A549 (cell line): ENCODE measurements at regions of chr2 and their contacts with region 1.

Region 1: GRCh38 chr2:64873472-64873924 is 115.7 kb upstream of the SLC1A4 start:
- DNase-seq: peak; percentile 65 to 73
- ATAC-seq: peak; percentile 83 to 94
- H3K4me3 ChIP-seq: no peak overlapping the region
- H3K27ac ChIP-seq: no peak overlapping the region
- H3K4me1 ChIP-seq: peaks cover 15% of the 10 kb centered on the region
- CTCF ChIP-seq: peak; percentile 95
- EP300 ChIP-seq: no peak
- POLR2A ChIP-seq: no peak
- RAD21 ChIP-seq: peak; percentile 94 to 97

Region 2: GRCh38 chr2:64595397-64596160 is 277.9 kb before region 1 on chr2:
- CTCF ChIA-PET with region 1: interaction called, 19 read pairs
- POLR2A ChIA-PET with region 1: no interaction called
- DNase-seq: peak in 1 of 2 experiments; percentile 38
- ATAC-seq: peak; percentile 43 to 72; a peak in 3 of 6 replicates
- H3K4me3 ChIP-seq: no peak overlapping the region
- H3K27ac ChIP-seq: no peak overlapping the region
- H3K4me1 ChIP-seq: peaks cover 21% of the 10 kb centered on the region; the same call in 1 of the 3 replicates
- CTCF ChIP-seq: peak; percentile 46
- EP300 ChIP-seq: no peak
- POLR2A ChIP-seq: no peak
- RAD21 ChIP-seq: peak; percentile 55 to 72